Endothelial cell of umbilical vein (primary cell): ENCODE measurements at regions of chr13 and their contacts with region 1.

Region 1: DNA sequence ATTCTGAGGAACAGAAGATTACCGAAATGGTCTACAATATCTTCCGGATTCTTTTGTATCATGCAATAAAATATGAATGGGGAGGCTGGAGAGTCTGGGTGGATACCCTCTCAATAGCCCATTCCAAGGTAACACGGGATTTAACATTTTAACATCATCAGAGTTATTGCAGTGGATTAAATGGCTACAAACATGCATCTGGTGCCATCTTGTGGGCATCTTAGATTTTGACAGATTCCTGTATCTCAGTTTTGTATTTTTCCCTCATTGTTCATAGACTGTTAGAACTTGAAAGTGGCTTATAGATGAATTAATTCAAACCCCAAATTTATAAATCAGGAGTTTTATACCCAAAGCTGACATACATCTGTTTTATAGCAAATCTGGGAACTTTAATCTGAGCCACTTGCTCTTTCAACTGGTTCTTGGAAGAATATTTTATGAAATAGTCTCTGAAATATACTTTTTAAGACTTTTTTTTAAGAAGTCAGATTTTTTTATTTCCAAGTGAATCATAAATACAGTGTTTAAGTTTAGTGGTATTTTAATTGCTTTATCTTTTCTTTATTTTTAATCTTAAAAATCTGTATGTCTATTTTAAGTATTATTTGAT is 215.2 kb downstream of the NBEA start:
- DNase-seq: peak; percentile 75
- H3K4me3 ChIP-seq: no peak overlapping the region
- H3K27ac ChIP-seq: no peak overlapping the region
- H3K4me1 ChIP-seq: no peaks in the 10 kb centered on the region
- H3K27me3 ChIP-seq: no peaks in the 10 kb centered on the region
- CTCF ChIP-seq: peak; percentile 42 to 45
- POLR2A ChIP-seq: no peak

Region 2: GRCh38 chr13:33799950-33800592 is 1357.2 kb before region 1 on chr13:
- CTCF ChIA-PET with region 1: interaction called, 11 read pairs
- POLR2A ChIA-PET with region 1: no interaction called
- dilution Hi-C with region 1: no loop called
- intact Hi-C with region 1: loop called (anchors 1 kb)
- DNase-seq: peak; percentile 67
- H3K4me3 ChIP-seq: no peak overlapping the region
- H3K27ac ChIP-seq: no peak overlapping the region
- H3K4me1 ChIP-seq: no peaks in the 10 kb centered on the region
- H3K27me3 ChIP-seq: peaks cover 0 to 7% of the 10 kb centered on the region in 2 experiments
- CTCF ChIP-seq: peak; percentile 24 to 37
- POLR2A ChIP-seq: no peak

Region 3: DNA sequence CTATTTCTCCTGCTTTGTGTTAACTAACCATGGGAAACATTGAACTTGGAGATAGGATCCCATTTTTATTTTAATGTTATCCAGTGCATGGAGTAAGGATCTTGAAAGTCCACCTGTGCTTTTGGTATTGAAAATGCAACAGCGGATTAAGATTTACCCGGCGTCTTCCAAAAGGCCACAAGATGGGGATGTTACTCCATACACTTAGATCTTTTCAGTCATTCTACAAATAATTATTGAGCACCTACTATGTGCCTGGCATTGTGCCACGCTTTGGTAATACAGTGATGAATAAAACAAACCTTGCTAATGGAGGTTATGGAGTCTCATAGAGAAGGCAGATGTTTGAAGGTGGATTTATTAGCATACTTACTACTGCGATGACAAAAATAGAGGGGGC is 1282.4 kb before region 1 on chr13:
- CTCF ChIA-PET with region 1: no interaction called
- POLR2A ChIA-PET with region 1: no interaction called
- dilution Hi-C with region 1: no loop called
- intact Hi-C with region 1: loop called (anchors 2 kb)
- DNase-seq: peak; percentile 17
- H3K4me3 ChIP-seq: no peak overlapping the region
- H3K27ac ChIP-seq: no peak overlapping the region
- H3K4me1 ChIP-seq: peaks cover 17% of the 10 kb centered on the region
- H3K27me3 ChIP-seq: no peaks in the 10 kb centered on the region
- CTCF ChIP-seq: peak in 1 of 2 donors; percentile 9
- POLR2A ChIP-seq: no peak

Region 4: GRCh38 chr13:33931397-33932311 is 1225.6 kb before region 1 on chr13:
- CTCF ChIA-PET with region 1: interaction called, 53 read pairs
- POLR2A ChIA-PET with region 1: no interaction called
- dilution Hi-C with region 1: no loop called
- intact Hi-C with region 1: loop called (anchors 1 kb)
- DNase-seq: peak; percentile 39
- H3K4me3 ChIP-seq: no peak overlapping the region
- H3K27ac ChIP-seq: no peak overlapping the region
- H3K4me1 ChIP-seq: no peaks in the 10 kb centered on the region
- H3K27me3 ChIP-seq: no peaks in the 10 kb centered on the region
- CTCF ChIP-seq: peak in 1 of 2 donors; percentile 52
- POLR2A ChIP-seq: no peak

Region 5: DNA sequence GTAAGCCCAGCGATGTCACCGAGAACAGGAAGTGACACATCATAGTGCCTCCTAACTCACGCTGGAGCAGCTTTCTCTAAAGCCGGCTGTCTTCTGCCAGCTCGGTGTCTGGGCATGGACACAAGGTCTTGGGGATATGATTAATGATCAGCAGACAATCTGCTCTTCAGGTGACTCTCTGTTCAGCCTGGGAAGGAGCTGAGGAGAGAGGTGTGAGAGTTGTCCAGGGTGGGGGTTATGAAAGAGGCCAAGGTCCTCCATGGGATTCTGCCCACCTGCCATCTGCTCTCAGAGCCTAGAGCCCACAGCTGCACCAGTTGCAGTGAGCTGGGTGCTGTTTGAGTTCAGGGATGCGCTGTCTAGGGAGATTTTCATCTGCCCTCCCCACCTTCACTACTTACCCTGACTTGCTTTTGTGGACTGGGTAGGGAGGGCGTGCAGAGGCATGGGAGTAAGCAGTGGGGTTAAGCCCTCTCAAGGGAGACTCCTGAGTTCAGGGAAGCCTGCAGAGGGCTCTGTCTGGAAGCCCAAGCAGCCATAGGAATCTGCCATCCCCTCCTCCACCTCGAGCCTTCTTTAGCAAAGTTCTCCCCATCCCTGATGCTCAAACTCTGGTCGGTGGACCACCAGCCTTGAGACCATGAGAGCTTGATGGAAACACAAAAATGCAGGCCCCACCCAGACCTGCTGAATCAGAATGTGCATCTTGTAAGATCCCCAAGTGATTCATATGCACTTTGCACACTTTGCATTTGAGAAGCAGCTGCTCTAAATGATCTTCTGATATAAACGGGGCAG is 799.6 kb before region 1 on chr13:
- CTCF ChIA-PET with region 1: no interaction called
- POLR2A ChIA-PET with region 1: no interaction called
- dilution Hi-C with region 1: no loop called
- intact Hi-C with region 1: loop called (anchors 10 kb)
- DNase-seq: peak; percentile 72
- H3K4me3 ChIP-seq: no peak overlapping the region
- H3K27ac ChIP-seq: peak overlapping the region; percentile 58
- H3K4me1 ChIP-seq: peaks cover 16% of the 10 kb centered on the region
- H3K27me3 ChIP-seq: no peaks in the 10 kb centered on the region
- CTCF ChIP-seq: no peak
- POLR2A ChIP-seq: no peak

Region 6: DNA sequence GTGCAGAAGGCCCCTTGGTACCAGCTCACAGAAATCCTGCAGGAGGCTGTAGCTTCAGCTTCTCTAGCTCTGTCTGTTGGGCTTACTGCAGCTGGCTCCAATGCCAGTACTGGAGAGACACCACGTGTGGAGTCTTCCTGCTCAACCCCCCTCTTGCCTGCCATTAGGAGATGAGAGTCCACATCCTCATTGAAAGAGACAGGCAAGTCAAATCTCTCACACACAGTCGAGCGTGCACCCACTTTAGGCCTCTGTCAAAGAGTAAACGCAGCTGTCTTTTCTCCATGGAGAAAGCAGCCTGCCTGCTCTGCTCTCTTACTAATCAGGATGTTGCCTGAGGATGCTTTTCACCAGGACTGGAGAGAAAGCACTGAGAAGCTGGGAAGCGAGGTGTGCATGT is 738.2 kb before region 1 on chr13:
- CTCF ChIA-PET with region 1: no interaction called
- POLR2A ChIA-PET with region 1: no interaction called
- dilution Hi-C with region 1: no loop called
- intact Hi-C with region 1: no loop called
- DNase-seq: no peak
- H3K4me3 ChIP-seq: no peak overlapping the region
- H3K27ac ChIP-seq: no peak overlapping the region
- H3K4me1 ChIP-seq: peaks cover under 1% of the 10 kb centered on the region
- H3K27me3 ChIP-seq: no peaks in the 10 kb centered on the region
- CTCF ChIP-seq: no peak
- POLR2A ChIP-seq: no peak

Region 7: DNA sequence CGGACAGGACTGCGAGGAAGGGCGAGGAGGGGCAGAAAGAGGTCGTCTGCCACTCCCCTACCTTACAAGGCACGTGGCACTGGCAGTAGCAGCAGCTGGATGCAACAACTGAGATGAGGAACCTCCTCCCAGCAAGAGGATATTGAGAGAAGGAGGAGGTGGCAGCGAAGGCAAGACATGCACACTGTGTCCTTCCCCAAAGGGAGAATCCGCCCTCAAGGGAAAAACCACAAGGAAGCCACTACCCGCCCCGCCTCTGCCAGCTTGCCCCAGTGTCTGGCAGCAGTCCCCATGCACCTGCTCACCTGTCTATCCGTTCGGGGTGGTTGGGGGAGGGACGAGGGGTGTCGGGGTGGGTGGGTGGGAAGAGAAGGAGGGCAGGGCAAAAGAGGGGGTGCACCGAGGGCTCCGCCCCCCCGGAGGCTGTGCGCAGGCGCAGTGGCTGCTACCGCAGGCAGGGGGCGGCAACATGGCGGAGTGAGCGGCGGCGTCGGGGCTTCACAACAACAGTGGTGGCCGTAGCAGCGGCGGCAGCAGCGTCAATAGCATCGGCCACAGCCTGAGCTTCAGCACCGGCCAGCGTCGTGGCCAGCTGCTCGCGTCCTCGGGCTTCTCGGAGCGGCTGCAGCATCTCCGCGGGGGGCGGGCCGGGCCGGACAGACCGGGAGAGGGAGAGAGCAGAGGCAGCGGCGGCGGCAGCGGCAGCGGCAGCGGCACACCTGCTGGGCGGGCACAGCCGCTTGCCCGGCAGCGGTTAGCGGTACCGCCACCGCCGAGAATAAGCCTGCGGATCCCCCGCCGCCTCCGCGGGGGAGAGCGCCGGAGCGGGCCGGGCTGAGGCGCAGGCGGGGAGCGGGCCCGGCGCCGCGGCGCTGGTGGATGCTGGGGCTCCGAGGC is 215.2 kb before region 1 on chr13 and contains the start of gene NBEA:
- CTCF ChIA-PET with region 1: interaction called, 4 read pairs
- POLR2A ChIA-PET with region 1: no interaction called
- dilution Hi-C with region 1: no loop called
- intact Hi-C with region 1: loop called (anchors 2 kb)
- DNase-seq: peak; percentile 80
- H3K4me3 ChIP-seq: peak within 1 kb of the TSS; percentile 60 to 83 (median 70)
- H3K27ac ChIP-seq: no peak within 1 kb of the TSS
- H3K4me1 ChIP-seq: peaks cover 13% of the 10 kb centered on the region
- H3K27me3 ChIP-seq: peaks cover 0 to 12% of the 10 kb centered on the region in 2 experiments
- CTCF ChIP-seq: no peak
- POLR2A ChIP-seq: peak; percentile 29
- total RNA-seq, gene NBEA: 4.4 and 4.8 TPM in 2 replicates